CD14-positive monocyte (primary cell): ENCODE measurements at regions of chr3 and their contacts with region 1.

Region 1: DNA sequence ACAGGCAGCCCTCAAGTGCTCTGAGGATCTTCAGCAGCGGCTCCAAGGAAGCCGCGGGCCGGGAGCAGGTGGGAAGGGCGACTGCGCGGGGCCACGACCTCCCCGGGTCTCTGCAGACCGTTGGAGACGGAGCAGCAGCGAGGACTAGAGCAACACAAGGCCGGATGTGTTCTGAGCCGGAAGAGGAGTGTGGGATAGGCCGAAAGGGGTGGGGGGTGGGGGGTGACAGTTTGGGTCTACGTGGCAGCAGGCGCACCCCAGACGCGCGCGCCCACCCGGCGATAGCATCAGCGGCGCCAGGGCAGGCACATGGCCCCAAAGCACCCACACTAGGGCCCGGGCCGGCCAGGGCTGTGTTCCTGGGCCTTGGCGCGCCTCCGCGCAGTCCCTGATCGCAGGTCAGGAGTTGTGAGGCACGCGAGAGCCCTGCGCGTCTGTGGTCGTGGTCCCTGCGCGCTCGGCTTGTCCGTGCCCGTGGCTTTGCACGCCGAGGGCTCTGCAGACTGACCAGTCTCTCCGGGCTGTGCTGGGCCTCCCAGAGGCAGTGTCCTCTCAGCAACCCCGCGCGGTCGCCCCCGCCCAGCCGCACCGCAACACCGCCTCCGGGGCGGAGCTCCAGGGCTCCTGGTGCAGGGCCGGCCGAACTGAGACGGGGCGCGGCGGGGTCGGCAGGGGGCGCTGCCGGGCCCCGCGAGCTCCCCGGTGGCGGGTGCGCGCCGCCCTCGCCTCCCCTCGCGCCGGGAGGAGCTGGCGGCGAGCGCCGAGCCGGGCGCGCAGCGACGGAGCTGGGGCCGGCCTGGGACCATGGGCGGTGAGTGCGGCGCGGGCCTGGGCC is at the start of gene PXYLP1:
- DNase-seq: peak; percentile 82 to 84 (median 83)
- H3K4me3 ChIP-seq: peak within 1 kb of the TSS; percentile 67 to 85 (median 80)
- H3K4me3 Mint-ChIP-seq: peak within 1 kb of the TSS; percentile 87 to 96
- H3K27ac ChIP-seq: peak within 1 kb of the TSS; percentile 22 to 79
- H3K27ac Mint-ChIP-seq: peak within 1 kb of the TSS; percentile 18 to 90 (median 79)
- H3K4me1 ChIP-seq: peaks cover 47 to 54% of the 10 kb centered on the region in 2 donors
- H3K4me1 Mint-ChIP-seq: peaks cover 55% of the 10 kb centered on the region
- H3K27me3 ChIP-seq: no peaks in the 10 kb centered on the region
- H3K27me3 Mint-ChIP-seq: peaks cover 0 to 8% (median 6%) of the 10 kb centered on the region in 3 donors
- CTCF ChIP-seq: peak; percentile 71
- polyA plus RNA-seq, gene PXYLP1: 4.1 to 10.9 (median 5.8) TPM

Region 2: GRCh38 chr3:140941434-140942220 is 289.7 kb before region 1 on chr3 and contains the start of gene SLC25A36:
- intact Hi-C with region 1: loop called in 1 of 2 experiments (anchors 10 kb)
- DNase-seq: peak; percentile 96 to 99 (median 97)
- H3K4me3 ChIP-seq: peak within 1 kb of the TSS; percentile 78 to 96 (median 89)
- H3K4me3 Mint-ChIP-seq: peak within 1 kb of the TSS; percentile 98 to 99
- H3K27ac ChIP-seq: peak within 1 kb of the TSS; percentile 82 to 85
- H3K27ac Mint-ChIP-seq: peak within 1 kb of the TSS; percentile 92 to 99 (median 97)
- H3K4me1 ChIP-seq: peaks cover 17 to 36% of the 10 kb centered on the region in 2 donors
- H3K4me1 Mint-ChIP-seq: peaks cover 31% of the 10 kb centered on the region
- H3K27me3 ChIP-seq: no peaks in the 10 kb centered on the region
- H3K27me3 Mint-ChIP-seq: peaks cover 0 to 3% (median 0%) of the 10 kb centered on the region in 3 donors
- CTCF ChIP-seq: no peak
- polyA plus RNA-seq, gene SLC25A36: 20.4 to 30.3 (median 20.6) TPM

Region 3: DNA sequence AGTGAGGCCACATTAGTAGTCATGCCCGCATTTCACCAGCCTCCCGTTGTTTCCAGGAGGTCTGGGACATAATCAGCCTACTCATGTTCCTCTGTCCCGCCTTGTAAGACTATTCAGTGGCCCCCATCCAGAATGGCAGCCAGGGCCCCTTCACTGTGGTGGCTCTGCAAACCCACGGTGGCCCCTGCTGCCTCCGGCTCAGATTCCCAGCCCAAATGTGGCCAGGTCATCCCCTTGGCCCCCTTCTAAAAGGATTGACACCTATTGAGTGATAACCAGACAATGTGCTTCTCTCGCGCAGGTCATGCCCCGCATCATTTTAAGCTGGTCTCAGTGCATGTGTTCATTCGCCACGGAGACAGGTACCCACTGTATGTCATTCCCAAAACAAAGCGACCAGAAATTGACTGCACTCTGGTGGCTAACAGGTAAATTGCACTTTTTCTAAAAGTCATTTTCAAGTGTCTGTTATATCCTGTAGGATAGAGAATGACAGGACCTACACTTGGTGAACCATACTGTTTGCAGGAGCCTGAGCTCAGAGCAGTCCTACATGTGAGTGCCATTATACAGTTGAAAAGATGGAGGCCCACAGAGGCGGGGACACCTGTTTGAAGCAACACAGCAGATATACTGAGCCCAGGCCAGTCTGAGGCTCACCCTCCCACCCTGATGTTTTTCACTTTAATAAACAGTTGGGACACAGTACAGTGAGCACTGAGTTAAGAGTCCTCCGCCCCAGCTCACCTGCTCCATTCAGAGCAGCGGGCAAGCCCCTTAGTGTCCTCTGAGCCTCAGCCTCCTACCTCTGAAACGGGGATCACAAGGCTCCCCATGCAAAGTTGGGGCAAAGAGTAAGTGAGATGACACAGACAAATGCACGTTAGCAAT is 48.0 kb after region 1 on chr3:
- intact Hi-C with region 1: loop called in 1 of 2 experiments (anchors 1 kb)
- DNase-seq: peak in 2 of 3 donors; percentile 11 to 22
- H3K4me3 ChIP-seq: no peak overlapping the region
- H3K4me3 Mint-ChIP-seq: no peak overlapping the region
- H3K27ac ChIP-seq: no peak overlapping the region
- H3K27ac Mint-ChIP-seq: peak overlapping the region in 1 of 7 donors; percentile 14
- H3K4me1 ChIP-seq: peaks cover 7 to 11% of the 10 kb centered on the region in 2 donors
- H3K4me1 Mint-ChIP-seq: peaks cover 22% of the 10 kb centered on the region
- H3K27me3 ChIP-seq: no peaks in the 10 kb centered on the region
- H3K27me3 Mint-ChIP-seq: peaks cover 0 to 3% (median 0%) of the 10 kb centered on the region in 3 donors
- CTCF ChIP-seq: peak; percentile 71